GM12878 (cell line): ENCODE measurements at regions of chr2 and their contacts with region 1.

Region 1: DNA sequence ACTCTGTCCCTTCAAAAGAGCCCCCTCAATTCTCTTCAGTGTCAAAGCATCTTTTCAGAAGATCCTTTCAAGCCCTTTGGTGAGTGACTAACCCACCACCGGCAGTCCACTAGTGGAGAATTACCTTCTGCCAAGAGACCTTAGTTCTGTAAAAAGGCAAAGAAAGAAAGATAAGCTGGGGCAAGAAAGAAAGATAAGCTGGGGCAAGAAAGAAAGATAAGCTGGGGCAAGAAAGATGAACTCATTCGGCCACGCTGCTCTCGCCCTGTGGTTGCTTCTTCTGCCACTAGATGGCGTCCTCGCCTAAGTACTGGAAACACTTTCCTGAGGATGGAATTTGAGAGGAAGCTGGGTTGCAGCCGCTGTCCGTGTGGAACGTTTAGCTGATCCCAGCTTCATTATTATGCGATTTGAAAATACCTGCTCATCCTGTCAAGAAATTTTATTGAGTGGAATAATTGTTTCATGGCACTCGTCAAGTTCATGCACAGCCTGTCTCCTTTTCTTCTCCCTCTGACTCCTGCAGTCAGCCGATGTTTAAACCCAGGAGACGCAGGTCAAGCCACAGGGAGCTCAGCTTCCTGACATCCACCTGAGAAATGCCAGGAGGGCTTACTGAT is 17.3 kb upstream of the ANXA4 start:
- DNase-seq: no peak
- ATAC-seq: peak; percentile 98
- H3K4me3 ChIP-seq: peak overlapping the region; percentile 69; the same call in 1 of the 2 replicates
- H3K27ac ChIP-seq: no peak overlapping the region
- H3K4me1 ChIP-seq: no peaks in the 10 kb centered on the region; the same call in 1 of the 2 replicates
- H3K27me3 ChIP-seq: no peaks in the 10 kb centered on the region
- CTCF ChIP-seq: peak; percentile 81 to 85 (median 82)
- EP300 ChIP-seq: no peak
- POLR2A ChIP-seq: no peak
- RAD21 ChIP-seq: peak; percentile 94

Region 2: GRCh38 chr2:69012310-69013141 is 712.1 kb before region 1 on chr2:
- CTCF ChIA-PET with region 1: no interaction called
- POLR2A ChIA-PET with region 1: no interaction called
- RAD21 ChIA-PET with region 1: no interaction called
- SMC1A ChIA-PET with region 1: no interaction called
- in situ Hi-C with region 1: loop called (anchors 25 kb)
- intact Hi-C with region 1: no loop called
- DNase-seq: no peak
- ATAC-seq: peak; percentile 85
- H3K4me3 ChIP-seq: no peak overlapping the region
- H3K27ac ChIP-seq: no peak overlapping the region
- H3K4me1 ChIP-seq: no peaks in the 10 kb centered on the region; the same call in 1 of the 2 replicates
- H3K27me3 ChIP-seq: peaks cover 6 to 14% of the 10 kb centered on the region in 2 experiments
- CTCF ChIP-seq: peak; percentile 42 to 57 (median 52)
- EP300 ChIP-seq: no peak
- POLR2A ChIP-seq: no peak
- RAD21 ChIP-seq: peak; percentile 43; the same call in 1 of the 2 replicates

Region 3: DNA sequence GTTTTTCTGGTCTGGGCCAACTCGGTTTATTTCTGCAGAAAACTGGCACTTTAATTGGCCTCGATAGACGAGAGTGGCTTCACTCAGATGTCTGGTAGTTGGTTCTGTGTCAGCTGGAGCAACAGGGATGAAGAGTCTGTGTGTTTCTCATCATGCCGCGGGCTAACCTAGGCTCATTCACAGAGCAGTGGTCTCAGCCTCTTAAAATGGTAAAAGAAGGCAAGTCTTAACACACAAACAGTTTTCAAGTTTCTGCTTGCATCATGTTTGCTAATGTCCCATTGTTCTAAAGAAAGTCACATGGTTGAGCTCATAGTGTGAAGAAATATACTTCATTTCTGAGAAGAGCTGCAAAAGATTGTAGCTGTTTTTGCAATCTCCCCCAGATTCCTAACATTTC is 20.2 kb before region 1 on chr2:
- CTCF ChIA-PET with region 1: no interaction called
- POLR2A ChIA-PET with region 1: no interaction called
- RAD21 ChIA-PET with region 1: no interaction called
- SMC1A ChIA-PET with region 1: no interaction called
- in situ Hi-C with region 1: no loop called
- intact Hi-C with region 1: no loop called
- DNase-seq: no peak
- ATAC-seq: no peak
- H3K4me3 ChIP-seq: no peak overlapping the region
- H3K27ac ChIP-seq: no peak overlapping the region
- H3K4me1 ChIP-seq: no peaks in the 10 kb centered on the region; the same call in 1 of the 2 replicates
- H3K27me3 ChIP-seq: no peaks in the 10 kb centered on the region
- CTCF ChIP-seq: no peak
- EP300 ChIP-seq: no peak
- POLR2A ChIP-seq: no peak
- RAD21 ChIP-seq: no peak

Region 4: GRCh38 chr2:69741619-69742466 is 17.2 kb after region 1 on chr2 and contains the start of gene ANXA4:
- CTCF ChIA-PET with region 1: interaction called, 48 read pairs
- POLR2A ChIA-PET with region 1: interaction called, 10 read pairs
- RAD21 ChIA-PET with region 1: interaction called, 53 read pairs
- SMC1A ChIA-PET with region 1: interaction called, 62 read pairs
- in situ Hi-C with region 1: no loop called
- intact Hi-C with region 1: no loop called
- DNase-seq: no peak
- ATAC-seq: peak; percentile 91
- H3K4me3 ChIP-seq: peak within 1 kb of the TSS; percentile 71
- H3K27ac ChIP-seq: peak within 1 kb of the TSS; percentile 95
- H3K4me1 ChIP-seq: peaks cover 6% of the 10 kb centered on the region
- H3K27me3 ChIP-seq: no peaks in the 10 kb centered on the region
- CTCF ChIP-seq: no peak
- EP300 ChIP-seq: peak in 1 of 2 experiments; percentile 34; a peak in 1 of 4 replicates
- POLR2A ChIP-seq: peak; percentile 89
- RAD21 ChIP-seq: no peak
- polyA plus RNA-seq, gene ANXA4: 64.6 to 73.1 TPM

Region 5: DNA sequence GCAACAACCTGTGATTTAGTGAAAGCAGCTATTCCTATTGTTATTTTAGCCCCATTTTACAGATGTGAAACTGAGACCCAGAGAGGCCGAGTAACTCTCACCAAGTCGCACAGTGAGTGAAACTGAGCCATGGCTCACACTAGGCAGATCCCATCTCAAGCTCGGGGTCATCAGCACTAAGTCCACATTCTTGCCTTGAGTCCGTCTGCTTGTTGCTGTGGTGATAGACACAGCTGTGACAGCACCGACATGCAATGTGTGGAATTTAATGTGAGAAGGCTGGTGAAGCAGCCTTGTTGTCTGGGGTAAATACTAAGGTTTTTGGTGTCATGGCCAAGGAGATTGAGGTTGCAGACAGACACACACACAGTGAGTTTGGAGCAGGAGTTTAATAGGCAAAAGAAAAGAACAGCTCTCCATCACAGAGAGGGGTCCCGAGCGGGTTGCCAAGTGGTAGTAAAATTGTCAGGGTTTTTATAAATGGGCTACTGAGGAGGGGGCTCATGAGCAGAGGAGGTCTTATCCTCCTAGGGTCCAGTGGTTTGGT is 64.6 kb after region 1 on chr2:
- CTCF ChIA-PET with region 1: interaction called, 33 read pairs
- POLR2A ChIA-PET with region 1: interaction called, 3 read pairs
- RAD21 ChIA-PET with region 1: interaction called, 28 read pairs
- SMC1A ChIA-PET with region 1: interaction called, 31 read pairs
- in situ Hi-C with region 1: no loop called
- intact Hi-C with region 1: no loop called
- DNase-seq: no peak
- ATAC-seq: peak; percentile 92
- H3K4me3 ChIP-seq: peak overlapping the region; percentile 54
- H3K27ac ChIP-seq: peak overlapping the region; percentile 92
- H3K4me1 ChIP-seq: peaks cover 32% of the 10 kb centered on the region
- H3K27me3 ChIP-seq: no peaks in the 10 kb centered on the region
- CTCF ChIP-seq: no peak
- EP300 ChIP-seq: peak in 1 of 2 experiments; percentile 42; a peak in 1 of 4 replicates
- POLR2A ChIP-seq: peak; percentile 61; the same call in 1 of the 2 replicates
- RAD21 ChIP-seq: no peak

Region 6: DNA sequence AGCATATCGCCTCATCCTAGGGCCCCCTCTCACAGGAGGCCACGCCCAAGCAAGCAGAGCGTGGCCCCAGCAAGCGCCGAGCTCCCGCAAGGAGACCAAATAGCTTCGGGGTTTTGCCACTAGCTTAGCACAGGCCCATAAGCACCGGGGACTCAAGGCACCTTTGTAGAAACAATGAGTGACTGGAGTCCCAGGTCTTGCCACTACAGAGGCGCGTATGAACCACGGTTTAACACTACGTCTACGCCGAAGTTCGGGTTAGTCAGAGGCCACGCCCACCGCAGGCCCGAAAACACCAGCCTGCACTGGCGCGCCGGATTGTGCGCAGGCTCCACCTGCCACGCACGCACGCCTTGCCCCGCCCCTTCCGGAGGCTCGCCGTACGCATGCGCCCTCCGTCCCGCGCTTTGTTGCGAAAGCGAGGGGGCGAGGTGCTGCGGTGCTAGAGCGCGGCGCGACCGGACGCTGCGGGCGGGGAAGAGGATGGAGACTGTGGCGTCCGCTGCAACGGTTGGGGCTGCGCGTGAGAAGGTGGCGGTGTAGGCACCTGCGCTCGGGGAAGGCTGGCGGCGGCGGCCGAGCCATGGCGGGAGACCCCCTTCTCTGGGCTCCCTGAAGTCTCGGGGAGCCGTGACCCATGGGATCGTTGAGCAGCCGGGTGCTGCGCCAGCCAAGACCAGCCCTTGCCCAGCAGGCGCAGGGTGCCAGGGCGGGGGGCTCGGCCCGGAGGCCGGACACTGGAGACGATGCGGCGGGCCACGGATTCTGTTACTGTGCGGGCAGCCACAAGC is 104.8 kb after region 1 on chr2 and contains the start of gene GMCL1:
- CTCF ChIA-PET with region 1: interaction called, 67 read pairs
- POLR2A ChIA-PET with region 1: interaction called, 5 read pairs
- RAD21 ChIA-PET with region 1: interaction called, 27 read pairs
- SMC1A ChIA-PET with region 1: interaction called, 14 read pairs
- in situ Hi-C with region 1: no loop called
- intact Hi-C with region 1: loop called (anchors 5 kb)
- DNase-seq: peak; percentile 92
- ATAC-seq: peak; percentile 94
- H3K4me3 ChIP-seq: peak within 1 kb of the TSS; percentile 87
- H3K27ac ChIP-seq: peak within 1 kb of the TSS; percentile 93
- H3K4me1 ChIP-seq: peaks cover 3% of the 10 kb centered on the region
- H3K27me3 ChIP-seq: no peaks in the 10 kb centered on the region
- CTCF ChIP-seq: no peak
- EP300 ChIP-seq: no peak
- POLR2A ChIP-seq: peak; percentile 93
- RAD21 ChIP-seq: no peak
- polyA plus RNA-seq, gene GMCL1: 3.7 to 4.8 TPM

Region 7: GRCh38 chr2:69893684-69894551 is 169.3 kb after region 1 on chr2 and contains the start of gene SNRNP27:
- CTCF ChIA-PET with region 1: interaction called, 10 read pairs
- POLR2A ChIA-PET with region 1: interaction called, 3 read pairs
- RAD21 ChIA-PET with region 1: interaction called, 32 read pairs
- SMC1A ChIA-PET with region 1: interaction called, 15 read pairs
- in situ Hi-C with region 1: loop called (anchors 10 kb)
- intact Hi-C with region 1: no loop called
- DNase-seq: peak; percentile 20
- ATAC-seq: peak; percentile 90
- H3K4me3 ChIP-seq: peak within 1 kb of the TSS; percentile 89
- H3K27ac ChIP-seq: peak within 1 kb of the TSS; percentile 85
- H3K4me1 ChIP-seq: 0 out of 2 replicates have a peak, but pooled peaks cover 3% of the 10 kb centered on the region
- H3K27me3 ChIP-seq: no peaks in the 10 kb centered on the region
- CTCF ChIP-seq: no peak
- EP300 ChIP-seq: no peak; a peak in 1 of 4 replicates
- POLR2A ChIP-seq: peak; percentile 80
- RAD21 ChIP-seq: no peak
- polyA plus RNA-seq, gene SNRNP27: 30.6 to 30.9 TPM